A673 (cell line): ENCODE measurements at regions of chr11 and their contacts with region 1.

Region 1: DNA sequence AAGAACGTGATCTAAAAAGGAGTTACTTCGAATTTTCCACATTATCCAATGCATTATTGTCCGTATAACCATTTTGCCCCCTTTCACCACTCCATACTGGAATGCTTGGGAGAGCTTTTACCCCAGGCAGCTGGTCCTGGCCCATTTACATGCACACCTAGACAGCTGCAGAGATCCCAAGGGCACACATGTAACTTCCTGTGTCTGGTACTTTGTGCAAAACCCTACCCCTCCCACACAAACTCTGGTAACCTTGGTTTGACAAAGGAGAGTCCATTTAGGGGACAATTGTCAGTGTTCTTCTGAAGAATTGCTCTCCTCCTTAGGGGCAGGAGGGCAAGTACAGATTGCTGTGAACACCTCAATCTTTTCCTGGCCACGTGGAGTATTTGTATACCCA is 57.3 kb upstream of the SORL1 start:
- DNase-seq: no peak
- H3K4me3 ChIP-seq: no peak overlapping the region
- H3K27ac ChIP-seq: no peak overlapping the region
- H3K4me1 ChIP-seq: no peaks in the 10 kb centered on the region
- H3K27me3 ChIP-seq: peaks cover 3% of the 10 kb centered on the region
- CTCF ChIP-seq: no peak

Region 2: DNA sequence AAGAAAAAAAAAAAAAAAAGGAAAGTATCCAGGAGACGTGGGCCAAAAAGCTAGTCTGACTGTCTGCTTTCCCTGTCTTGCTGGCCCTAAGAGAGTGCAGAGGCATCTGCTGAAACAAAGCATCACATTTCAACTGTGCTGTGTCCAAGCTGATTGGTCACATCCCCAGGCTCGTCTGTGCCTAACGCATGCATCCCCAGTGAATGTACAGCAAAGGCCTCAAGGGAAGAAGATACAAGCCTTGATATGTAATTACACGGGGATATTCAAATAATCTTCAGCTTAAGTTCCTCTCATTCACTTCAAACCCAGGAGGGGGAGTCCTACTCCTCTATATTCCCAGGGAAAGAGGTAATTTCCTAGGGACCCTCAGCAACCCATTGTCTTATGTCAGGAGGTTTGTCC is 52.0 kb after region 1 on chr11:
- CTCF ChIA-PET with region 1: no interaction called
- POLR2A ChIA-PET with region 1: no interaction called
- intact Hi-C with region 1: loop called (anchors 2 kb)
- DNase-seq: peak; percentile 65
- H3K4me3 ChIP-seq: no peak overlapping the region
- H3K27ac ChIP-seq: no peak overlapping the region
- H3K4me1 ChIP-seq: no peaks in the 10 kb centered on the region
- H3K27me3 ChIP-seq: peaks cover 14% of the 10 kb centered on the region
- CTCF ChIP-seq: peak; percentile 49